Activated CD4-positive, alpha-beta memory T cell treated with anti-CD3 and anti-CD28 coated beads, Interleukin-2, amount 10 ng/mL, durations not matched to agents 7 days and 5 days (primary cell): ENCODE measurements at regions of chr5 and their contacts with region 1.

Region 1: GRCh38 chr5:151115274-151115905 is 34.6 kb upstream of the TNIP1 start:
- DNase-seq: peak; percentile 71
- H3K4me3 Mint-ChIP-seq: no peak overlapping the region
- H3K27ac Mint-ChIP-seq: no peak overlapping the region
- H3K4me1 Mint-ChIP-seq: peaks cover 2% of the 10 kb centered on the region
- H3K27me3 Mint-ChIP-seq: no peaks in the 10 kb centered on the region

Region 2: GRCh38 chr5:151051066-151051930 is 64.1 kb before region 1 on chr5:
- CTCF ChIA-PET with region 1: interaction called, 173 read pairs
- POLR2A ChIA-PET with region 1: interaction called, 9 read pairs
- DNase-seq: peak; percentile 73
- H3K4me3 Mint-ChIP-seq: no peak overlapping the region
- H3K27ac Mint-ChIP-seq: peak overlapping the region; percentile 26
- H3K4me1 Mint-ChIP-seq: peaks cover 11% of the 10 kb centered on the region
- H3K27me3 Mint-ChIP-seq: no peaks in the 10 kb centered on the region

Region 3: GRCh38 chr5:151075698-151076331 is 39.6 kb before region 1 on chr5:
- CTCF ChIA-PET with region 1: interaction called, 17 read pairs
- POLR2A ChIA-PET with region 1: interaction called, 4 read pairs
- DNase-seq: no peak
- H3K4me3 Mint-ChIP-seq: peak overlapping the region; percentile 21
- H3K27ac Mint-ChIP-seq: peak overlapping the region; percentile 54
- H3K4me1 Mint-ChIP-seq: peaks cover 65% of the 10 kb centered on the region
- H3K27me3 Mint-ChIP-seq: no peaks in the 10 kb centered on the region

Region 4: GRCh38 chr5:151093476-151093889 is 21.9 kb before region 1 on chr5:
- CTCF ChIA-PET with region 1: interaction called, 12 read pairs
- POLR2A ChIA-PET with region 1: interaction called, 22 read pairs
- DNase-seq: no peak
- H3K4me3 Mint-ChIP-seq: peak overlapping the region; percentile 52
- H3K27ac Mint-ChIP-seq: peak overlapping the region; percentile 84
- H3K4me1 Mint-ChIP-seq: peaks cover 61% of the 10 kb centered on the region
- H3K27me3 Mint-ChIP-seq: peaks cover 5% of the 10 kb centered on the region

Region 5: GRCh38 chr5:151141535-151141934 is 26.1 kb after region 1 on chr5:
- CTCF ChIA-PET with region 1: interaction called, 10 read pairs
- POLR2A ChIA-PET with region 1: interaction called, 4 read pairs
- DNase-seq: peak; percentile 61
- H3K4me3 Mint-ChIP-seq: peak overlapping the region; percentile 21
- H3K27ac Mint-ChIP-seq: peak overlapping the region; percentile 70
- H3K4me1 Mint-ChIP-seq: peaks cover 93% of the 10 kb centered on the region
- H3K27me3 Mint-ChIP-seq: no peaks in the 10 kb centered on the region

Region 6: DNA sequence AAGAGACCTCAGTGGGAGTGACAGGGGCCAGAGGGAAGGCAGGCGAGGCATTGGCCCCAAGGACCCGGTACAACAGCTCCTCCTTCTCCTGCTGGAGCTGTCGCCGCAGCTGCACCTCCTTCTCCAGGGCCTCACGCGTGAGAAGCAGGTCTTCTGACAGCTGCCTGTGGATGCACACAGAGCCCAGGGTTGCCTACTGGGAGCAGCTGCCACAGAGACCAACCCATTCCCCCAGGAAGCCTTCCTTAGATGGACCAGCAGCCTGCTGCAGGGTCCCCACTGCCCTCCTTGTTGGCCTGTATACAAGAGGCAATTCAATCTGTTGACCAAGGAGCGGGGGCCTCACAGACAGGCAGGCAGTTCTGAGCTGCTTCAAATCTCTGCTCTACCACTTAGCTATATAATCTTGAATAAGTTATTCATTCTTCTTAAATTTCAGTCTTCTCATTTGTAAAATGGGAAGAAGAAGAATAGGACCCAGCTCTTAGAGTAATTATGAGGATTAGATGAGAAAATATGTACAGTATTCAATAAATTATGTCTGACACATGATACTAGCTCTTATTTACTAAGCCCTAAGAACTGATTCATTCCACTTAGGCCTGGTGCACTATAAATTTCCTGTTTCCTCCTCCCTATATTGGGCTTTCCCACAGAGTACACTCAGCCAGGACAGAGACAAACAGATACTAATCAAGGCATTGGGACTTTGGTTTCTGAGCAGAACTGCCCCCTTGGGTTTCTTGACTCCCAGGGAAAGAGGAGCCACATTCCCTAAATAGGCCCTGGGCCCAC is 68.3 kb after region 1 on chr5:
- CTCF ChIA-PET with region 1: no interaction called
- POLR2A ChIA-PET with region 1: no interaction called
- DNase-seq: no peak
- H3K4me3 Mint-ChIP-seq: no peak overlapping the region
- H3K27ac Mint-ChIP-seq: no peak overlapping the region
- H3K4me1 Mint-ChIP-seq: no peaks in the 10 kb centered on the region
- H3K27me3 Mint-ChIP-seq: no peaks in the 10 kb centered on the region